ENCODE measurements at regions of chr9 and their contacts with region 1.

Region 1: DNA sequence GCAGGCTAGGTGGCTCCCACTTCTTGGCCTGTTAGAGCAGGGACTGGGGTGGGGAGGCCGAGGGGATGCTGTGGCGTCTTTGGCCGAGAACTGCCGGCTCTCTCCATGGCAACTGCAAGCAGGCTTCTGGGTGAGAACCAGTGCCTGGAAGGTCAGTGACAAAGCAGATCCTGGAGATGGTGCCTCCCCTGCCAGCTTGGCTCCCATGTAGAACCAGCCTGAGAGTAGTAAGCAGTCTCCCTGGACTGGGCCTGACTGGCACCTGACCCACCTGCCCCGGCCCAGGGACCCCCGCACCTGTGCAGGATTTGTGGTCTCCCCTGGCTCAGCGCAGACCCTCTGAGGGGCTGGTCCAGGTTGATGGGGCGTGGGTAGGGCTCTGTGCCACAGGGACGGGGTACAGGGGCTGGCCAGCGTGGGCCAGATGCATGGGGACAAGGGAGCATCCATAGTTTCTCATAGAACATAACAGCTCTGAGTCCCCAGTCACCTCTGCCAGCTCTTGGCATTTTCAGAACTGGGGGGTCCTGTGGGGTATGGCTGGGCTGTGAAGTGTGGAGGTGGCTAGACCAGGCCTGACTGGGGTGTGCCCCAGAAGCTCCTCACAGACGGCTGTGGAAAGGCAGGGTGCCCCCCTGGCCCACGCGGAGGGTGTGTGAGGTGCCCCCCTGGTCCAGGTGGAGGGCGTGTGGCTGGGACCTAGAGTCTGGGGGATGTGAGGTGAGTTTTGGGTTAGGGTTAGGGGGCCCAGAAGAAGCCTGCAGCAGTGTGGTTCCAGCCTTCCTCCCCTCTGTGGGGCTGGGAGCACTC is 22.2 kb downstream of the CACNA1B start:
- DNase-seq: no peak
- ATAC-seq: no peak
- H3K4me3 ChIP-seq: no peak overlapping the region
- H3K27ac ChIP-seq: no peak overlapping the region
- H3K4me1 ChIP-seq: no peaks in the 10 kb centered on the region
- H3K27me3 ChIP-seq: no peaks in the 10 kb centered on the region
- CTCF ChIP-seq: no peak
- POLR2A ChIP-seq: no peak

Region 2: GRCh38 chr9:137968235-137968634 is 68.5 kb after region 1 on chr9:
- in situ Hi-C with region 1: loop called in 1 of 4 experiments (anchors 10 kb)
- intact Hi-C with region 1: no loop called
- DNase-seq: no peak
- ATAC-seq: no peak
- H3K4me3 ChIP-seq: no peak overlapping the region
- H3K27ac ChIP-seq: no peak overlapping the region
- H3K4me1 ChIP-seq: no peaks in the 10 kb centered on the region
- H3K27me3 ChIP-seq: no peaks in the 10 kb centered on the region
- CTCF ChIP-seq: no peak
- POLR2A ChIP-seq: no peak

Measured in gastrocnemius medialis (tissue), 4 donors.